ENCODE measurements at regions of chr19 and their contacts with region 1.

Region 1: DNA sequence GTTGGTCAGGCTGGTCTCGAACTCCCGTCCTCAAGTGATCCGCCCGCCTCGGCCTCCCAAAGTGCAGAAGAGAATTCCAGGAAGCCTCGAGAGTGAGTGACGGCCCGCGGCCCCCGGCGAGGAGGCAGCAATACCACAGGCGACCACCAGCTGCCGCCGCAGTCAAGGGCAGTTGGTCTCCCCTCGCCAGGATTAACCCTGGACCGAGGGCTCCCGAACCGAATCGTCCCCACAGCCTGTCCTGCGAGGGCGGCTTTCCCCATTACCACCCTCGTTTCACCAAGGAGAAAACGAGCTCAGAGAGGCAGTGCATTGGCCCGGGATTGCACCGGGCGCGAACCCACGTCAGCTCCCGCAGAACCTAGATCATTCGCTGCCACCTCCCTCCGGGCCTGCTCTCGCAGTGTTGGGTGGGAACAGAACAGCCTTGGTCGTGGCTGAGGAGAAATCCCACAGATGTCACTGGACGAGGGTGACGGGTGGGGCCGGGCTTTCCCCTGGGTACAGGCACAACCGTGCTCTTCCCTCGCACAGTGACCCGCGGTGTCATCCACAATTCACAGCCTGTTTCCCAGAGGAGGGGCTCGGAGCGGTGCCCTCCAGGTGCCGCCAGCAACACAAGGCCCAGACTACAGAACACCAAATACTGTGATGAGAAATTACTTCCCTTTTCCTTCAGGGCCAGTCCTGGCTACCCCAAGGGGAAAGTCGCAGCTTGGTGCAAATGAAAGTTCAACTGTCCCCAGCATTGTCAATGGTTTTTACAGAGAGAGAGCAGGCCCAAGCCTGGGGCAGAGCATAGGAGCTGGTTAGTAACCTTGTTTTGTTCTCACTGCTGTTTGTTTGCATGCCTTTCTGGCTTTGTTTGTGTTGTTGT is 24.8 kb downstream of the C2CD4C start:
- DNase-seq: no peak
- H3K4me3 ChIP-seq: no peak overlapping the region
- H3K27ac ChIP-seq: no peak overlapping the region
- H3K4me1 ChIP-seq: no peaks in the 10 kb centered on the region
- H3K27me3 ChIP-seq: peaks cover 12% of the 10 kb centered on the region
- CTCF ChIP-seq: no peak

Region 2: DNA sequence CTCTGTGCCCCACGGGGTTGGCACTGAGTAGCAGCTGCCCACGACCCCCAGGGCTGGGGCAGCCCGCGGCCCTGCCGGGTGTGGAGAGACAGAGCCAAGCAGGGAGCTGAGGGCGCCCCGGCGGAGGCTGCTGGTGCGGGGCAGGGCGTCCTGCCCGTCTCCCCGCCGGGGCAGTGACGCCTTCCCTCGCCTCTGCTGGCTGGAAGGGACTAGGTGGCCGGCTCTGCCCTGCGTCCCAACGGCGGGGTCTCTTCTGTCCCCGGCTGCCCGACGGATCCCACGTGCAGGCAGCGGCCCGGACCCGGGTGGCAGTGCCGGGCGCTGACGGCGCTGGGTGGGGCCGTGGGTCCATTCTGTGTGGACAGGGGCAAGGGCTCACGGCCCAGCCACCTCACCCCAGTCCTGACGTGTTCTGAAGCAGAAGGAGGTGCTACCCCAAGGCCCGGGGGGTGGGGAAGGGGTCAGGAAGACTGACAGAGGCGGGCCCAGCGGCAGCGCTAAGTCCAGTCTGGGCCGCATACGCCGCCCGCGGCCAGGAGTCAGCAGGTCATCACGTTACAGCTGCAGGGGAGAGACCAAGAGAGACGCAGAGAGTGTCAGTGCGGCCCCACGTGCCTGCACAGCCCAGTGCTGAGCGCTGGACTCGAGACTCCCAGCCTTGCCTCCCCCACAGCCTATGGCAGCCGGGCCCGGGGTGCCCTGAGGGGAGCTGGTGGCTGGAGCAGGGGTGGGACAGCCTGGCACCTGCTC is 77.8 kb before region 1 on chr19:
- intact Hi-C with region 1: no loop called
- DNase-seq: no peak
- H3K4me3 ChIP-seq: no peak overlapping the region
- H3K27ac ChIP-seq: no peak overlapping the region
- H3K4me1 ChIP-seq: no peaks in the 10 kb centered on the region
- H3K27me3 ChIP-seq: no peaks in the 10 kb centered on the region
- CTCF ChIP-seq: no peak

Region 3: DNA sequence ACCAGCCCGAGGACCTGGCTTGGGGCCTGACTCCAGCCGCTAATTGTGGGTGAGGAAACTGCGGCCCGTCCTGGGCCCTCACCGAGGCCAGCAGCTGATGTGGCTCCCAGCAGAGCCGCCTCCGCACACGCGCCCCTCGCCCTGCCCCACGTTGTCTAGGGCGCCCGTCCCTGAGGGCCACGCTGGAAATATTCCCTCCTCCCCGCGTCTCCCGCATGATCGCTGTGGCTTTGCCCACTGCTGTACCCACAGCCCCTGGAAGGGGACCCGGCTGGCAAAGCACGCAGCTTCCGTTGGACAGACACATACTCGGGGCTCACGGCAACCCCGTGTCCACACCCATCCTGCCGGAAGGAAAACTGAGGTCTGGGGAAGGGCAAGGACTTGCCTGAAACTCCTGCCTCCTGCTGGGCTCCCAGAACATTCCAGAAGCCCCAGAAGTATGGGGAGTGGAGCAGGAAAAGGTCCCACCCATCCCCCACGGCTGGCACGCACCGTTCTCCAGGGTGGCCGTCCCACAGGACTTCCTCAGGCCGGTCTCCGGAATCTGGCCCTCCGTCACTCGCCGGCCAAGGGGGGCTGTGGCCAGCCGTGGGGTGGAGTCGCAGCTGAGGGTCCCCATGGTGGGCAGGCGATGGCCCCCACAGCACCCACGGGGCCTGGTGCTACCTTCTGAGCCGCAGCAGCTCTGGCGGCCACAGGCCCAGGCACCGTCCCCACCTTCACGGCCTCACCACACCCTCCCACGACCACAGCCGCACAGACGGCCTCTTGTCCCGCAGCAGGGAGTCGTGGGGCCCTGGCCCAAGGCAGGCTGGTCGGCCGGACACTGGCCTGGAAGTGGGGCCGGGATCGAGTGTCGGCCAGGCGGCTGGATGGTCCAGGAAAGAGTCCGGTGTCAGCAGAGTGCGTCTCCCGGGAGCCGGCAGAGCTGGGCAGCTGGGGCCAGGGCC is 90.2 kb after region 1 on chr19:
- intact Hi-C with region 1: loop called (anchors 10 kb)
- DNase-seq: no peak
- H3K4me3 ChIP-seq: no peak overlapping the region
- H3K27ac ChIP-seq: no peak overlapping the region
- H3K4me1 ChIP-seq: no peaks in the 10 kb centered on the region
- H3K27me3 ChIP-seq: no peaks in the 10 kb centered on the region
- CTCF ChIP-seq: no peak

Region 4: GRCh38 chr19:548841-549830 is 165.0 kb after region 1 on chr19:
- intact Hi-C with region 1: no loop called
- DNase-seq: no peak
- H3K4me3 ChIP-seq: no peak overlapping the region
- H3K27ac ChIP-seq: no peak overlapping the region
- H3K4me1 ChIP-seq: no peaks in the 10 kb centered on the region
- H3K27me3 ChIP-seq: no peaks in the 10 kb centered on the region
- CTCF ChIP-seq: no peak

Measured in colonic mucosa (tissue), 4 donors.